K562 (cell line): ENCODE measurements at regions of chr17 and their contacts with region 1.

Region 1: GRCh38 chr17:75405365-75406221 is at the start of gene GRB2:
- DNase-seq: peak; percentile 98 to 100 (median 100)
- ATAC-seq: peak; percentile 95
- H3K4me3 ChIP-seq: peak within 1 kb of the TSS; percentile 90
- H3K27ac ChIP-seq: peak within 1 kb of the TSS; percentile 84
- H3K4me1 ChIP-seq: peaks cover 12 to 15% of the 10 kb centered on the region in 2 experiments; a peak in 3 of 5 replicates
- H3K27me3 ChIP-seq: no peaks in the 10 kb centered on the region; a peak in 1 of 5 replicates
- CTCF ChIP-seq: no peak
- EP300 ChIP-seq: no peak
- POLR2A ChIP-seq: peak; percentile 90
- RAD21 ChIP-seq: no peak
- polyA plus RNA-seq, gene GRB2: 57.2 to 69.1 TPM

Region 2: GRCh38 chr17:75319904-75320691 is 85.5 kb before region 1 on chr17:
- CTCF ChIA-PET with region 1: interaction called, 24 read pairs
- POLR2A ChIA-PET with region 1: interaction called, 3 read pairs
- in situ Hi-C with region 1: no loop called
- intact Hi-C with region 1: loop called (anchors 1 kb)
- DNase-seq: no peak
- ATAC-seq: no peak
- H3K4me3 ChIP-seq: no peak overlapping the region
- H3K27ac ChIP-seq: no peak overlapping the region
- H3K4me1 ChIP-seq: peaks cover 4 to 15% of the 10 kb centered on the region in 2 experiments; a peak in 4 of 5 replicates
- H3K27me3 ChIP-seq: no peaks in the 10 kb centered on the region
- CTCF ChIP-seq: no peak
- EP300 ChIP-seq: no peak
- POLR2A ChIP-seq: no peak
- RAD21 ChIP-seq: no peak